ENCODE measurements at regions of chr19 and their contacts with region 1.

Region 1: GRCh38 chr19:19482809-19483596 is 32.3 kb downstream of the TSSK6 start:
- DNase-seq: no peak
- ATAC-seq: no peak
- H3K4me3 ChIP-seq: no peak overlapping the region
- H3K4me3 Mint-ChIP-seq: no peak overlapping the region
- H3K27ac ChIP-seq: no peak overlapping the region
- H3K27ac Mint-ChIP-seq: peak overlapping the region; percentile 45 to 72
- H3K4me1 ChIP-seq: peaks cover 10 to 66% of the 10 kb centered on the region in 2 experiments
- H3K4me1 Mint-ChIP-seq: peaks cover 55 to 70% (median 69%) of the 10 kb centered on the region in 3 donors
- H3K27me3 ChIP-seq: no peaks in the 10 kb centered on the region
- H3K27me3 Mint-ChIP-seq: no peaks in the 10 kb centered on the region

Region 2: GRCh38 chr19:19788015-19788414 is 305.0 kb after region 1 on chr19:
- CTCF ChIA-PET with region 1: no interaction called
- POLR2A ChIA-PET with region 1: interaction called in 1 of 2 experiments, 11 read pairs
- DNase-seq: no peak
- ATAC-seq: no peak
- H3K4me3 ChIP-seq: no peak overlapping the region
- H3K4me3 Mint-ChIP-seq: no peak overlapping the region
- H3K27ac ChIP-seq: no peak overlapping the region
- H3K27ac Mint-ChIP-seq: no peak overlapping the region
- H3K4me1 ChIP-seq: no peaks in the 10 kb centered on the region
- H3K4me1 Mint-ChIP-seq: peaks cover 19 to 31% (median 22%) of the 10 kb centered on the region in 3 donors
- H3K27me3 ChIP-seq: no peaks in the 10 kb centered on the region
- H3K27me3 Mint-ChIP-seq: no peaks in the 10 kb centered on the region

Measured in T-cell (primary cell).